ENCODE measurements at regions of chr1 and their contacts with region 1.

Region 1: DNA sequence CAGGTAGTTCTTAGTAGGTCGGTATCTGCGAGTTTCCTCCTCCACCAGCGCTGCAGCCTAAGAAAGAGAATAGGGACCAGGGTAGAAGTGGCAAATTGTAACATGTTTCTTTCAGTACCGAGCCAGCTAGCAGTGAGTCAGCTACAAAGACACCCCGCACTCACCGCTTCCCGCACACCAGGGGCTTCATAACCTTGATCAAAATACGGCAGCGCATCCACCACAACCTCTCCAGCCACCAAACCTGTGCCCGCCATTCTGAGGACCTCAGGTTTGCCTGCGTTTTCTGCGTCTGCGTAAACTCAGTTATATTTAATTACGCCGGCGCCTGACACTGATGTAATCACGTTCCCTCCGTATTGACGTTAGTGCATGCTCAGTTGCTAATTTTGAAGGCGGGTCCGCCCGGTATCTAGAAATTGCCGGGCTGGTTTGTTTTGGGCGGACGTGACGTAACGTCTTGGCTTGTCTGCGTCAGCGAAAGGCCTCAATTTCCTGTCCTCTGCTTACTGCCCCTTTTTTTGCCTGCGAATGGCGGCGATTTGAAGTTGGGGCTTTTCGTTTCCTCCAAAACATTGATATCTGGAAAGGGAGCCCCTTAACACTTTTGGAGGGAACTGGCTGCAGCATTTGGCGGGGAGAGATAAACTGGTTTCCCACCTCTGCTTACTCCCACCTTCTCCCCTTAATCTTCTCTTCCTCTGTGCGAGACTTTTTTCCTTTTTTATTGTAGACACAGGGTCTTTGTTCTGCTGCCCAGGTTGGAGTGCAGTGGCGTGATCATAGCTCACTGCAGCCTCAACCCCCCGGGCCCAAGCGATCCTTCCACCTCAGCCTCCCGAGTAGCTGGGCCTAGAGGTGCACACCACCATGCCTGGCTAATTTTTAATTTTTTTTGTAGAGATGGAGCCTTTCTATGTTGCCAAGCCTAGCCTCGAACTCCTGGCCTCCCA is at the start of gene BCAS2:
- DNase-seq: peak; percentile 89 to 94
- H3K4me3 ChIP-seq: peak within 1 kb of the TSS; percentile 61
- H3K4me3 Mint-ChIP-seq: peak within 1 kb of the TSS; percentile 96
- H3K27ac Mint-ChIP-seq: peak within 1 kb of the TSS; percentile 94
- H3K4me1 ChIP-seq: 0 out of 2 replicates have a peak, but pooled peaks cover 3% of the 10 kb centered on the region
- H3K4me1 Mint-ChIP-seq: no peaks in the 10 kb centered on the region
- H3K27me3 ChIP-seq: no peaks in the 10 kb centered on the region
- H3K27me3 Mint-ChIP-seq: no peaks in the 10 kb centered on the region
- CTCF ChIP-seq: no peak
- total RNA-seq, gene BCAS2: 29.8 and 30.1 TPM in 2 replicates

Region 2: DNA sequence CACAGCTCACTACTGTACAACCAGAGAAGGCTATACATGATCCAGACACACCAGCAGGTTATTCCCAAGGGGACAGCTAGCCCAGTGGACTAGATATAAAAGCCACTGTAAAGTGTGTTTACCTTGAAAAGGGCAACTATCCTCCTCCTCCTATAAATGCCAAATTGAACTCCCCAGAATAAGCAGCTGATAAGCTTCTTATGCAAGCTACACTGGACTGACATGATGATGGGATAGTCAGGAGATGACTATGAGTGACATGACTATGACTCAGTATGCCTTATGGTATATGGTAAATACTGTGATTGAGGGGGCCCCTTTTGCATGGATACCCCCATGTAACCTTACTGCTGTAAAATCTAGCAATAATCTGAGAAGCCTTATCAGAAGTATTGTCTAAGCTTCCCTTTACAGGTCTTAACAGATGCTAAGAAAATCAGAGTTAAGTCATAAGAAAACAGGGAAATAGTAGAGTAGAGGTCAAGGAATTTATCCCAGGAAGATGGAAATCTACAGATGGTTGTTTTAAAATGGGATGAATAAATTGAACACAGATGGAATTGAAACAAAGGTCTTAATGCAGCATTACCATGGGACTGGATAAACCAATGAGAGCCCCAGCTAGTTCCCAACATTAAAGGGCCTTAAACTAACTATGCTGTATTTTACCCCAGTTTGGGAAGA is 126.4 kb before region 1 on chr1:
- CTCF ChIA-PET with region 1: no interaction called
- POLR2A ChIA-PET with region 1: interaction called, 10 read pairs
- intact Hi-C with region 1: no loop called
- DNase-seq: no peak
- H3K4me3 ChIP-seq: no peak overlapping the region
- H3K4me3 Mint-ChIP-seq: no peak overlapping the region
- H3K27ac Mint-ChIP-seq: no peak overlapping the region
- H3K4me1 ChIP-seq: peaks cover 40% of the 10 kb centered on the region
- H3K4me1 Mint-ChIP-seq: peaks cover 18% of the 10 kb centered on the region
- H3K27me3 ChIP-seq: no peaks in the 10 kb centered on the region
- H3K27me3 Mint-ChIP-seq: no peaks in the 10 kb centered on the region
- CTCF ChIP-seq: no peak

Region 3: DNA sequence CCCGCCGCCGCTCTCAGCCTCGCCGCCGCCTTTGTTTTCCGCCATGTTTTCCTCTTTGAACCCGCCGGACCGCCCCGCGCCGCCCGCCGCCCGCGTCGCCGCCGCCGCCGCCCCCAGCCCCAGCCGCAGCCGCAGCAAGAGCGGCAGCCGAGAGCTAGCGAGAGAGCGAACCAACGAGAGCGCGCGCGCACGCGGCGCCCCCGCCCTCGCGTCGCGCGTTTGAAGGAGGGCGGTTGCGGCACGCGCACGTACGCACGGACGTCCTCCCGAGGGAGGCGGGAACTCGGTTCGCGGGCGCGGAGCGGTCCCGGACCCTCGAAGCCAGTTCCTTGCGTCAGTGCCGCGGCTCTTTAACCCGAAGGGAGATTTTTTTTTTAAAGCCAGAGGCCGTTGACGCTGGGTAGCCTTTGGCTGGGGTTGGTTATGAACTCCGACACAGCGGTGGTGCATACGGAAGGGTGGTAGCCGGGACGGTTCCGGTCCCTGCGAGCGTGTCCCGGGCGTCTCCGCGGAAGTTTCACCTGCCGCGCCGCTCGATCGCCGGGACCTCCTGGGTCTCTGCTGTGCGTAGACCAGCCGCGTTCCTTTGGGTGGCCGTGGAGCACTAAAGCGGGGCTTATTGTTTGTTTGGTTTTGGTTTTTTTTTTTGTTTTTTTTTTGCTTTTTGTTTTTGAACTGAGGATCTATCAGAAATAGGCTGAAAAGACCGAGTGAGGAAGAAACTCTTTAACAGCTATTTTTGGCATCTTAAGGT is 70.4 kb before region 1 on chr1 and contains the start of gene TRIM33:
- CTCF ChIA-PET with region 1: no interaction called
- POLR2A ChIA-PET with region 1: no interaction called
- intact Hi-C with region 1: loop called (anchors 2 kb)
- DNase-seq: peak; percentile 86 to 89
- H3K4me3 ChIP-seq: peak within 1 kb of the TSS; percentile 51
- H3K4me3 Mint-ChIP-seq: peak within 1 kb of the TSS; percentile 81
- H3K27ac Mint-ChIP-seq: peak within 1 kb of the TSS; percentile 95
- H3K4me1 ChIP-seq: peaks cover 11% of the 10 kb centered on the region; the same call in 1 of the 2 replicates
- H3K4me1 Mint-ChIP-seq: peaks cover 28% of the 10 kb centered on the region
- H3K27me3 ChIP-seq: no peaks in the 10 kb centered on the region
- H3K27me3 Mint-ChIP-seq: no peaks in the 10 kb centered on the region
- CTCF ChIP-seq: no peak
- total RNA-seq, gene TRIM33: 28.7 and 30.4 TPM in 2 replicates

Region 4: GRCh38 chr1:114558544-114558943 is 23.1 kb before region 1 on chr1:
- CTCF ChIA-PET with region 1: no interaction called
- POLR2A ChIA-PET with region 1: no interaction called
- intact Hi-C with region 1: no loop called
- DNase-seq: no peak
- H3K4me3 ChIP-seq: no peak overlapping the region
- H3K4me3 Mint-ChIP-seq: no peak overlapping the region
- H3K27ac Mint-ChIP-seq: no peak overlapping the region
- H3K4me1 ChIP-seq: no peaks in the 10 kb centered on the region
- H3K4me1 Mint-ChIP-seq: peaks cover 6% of the 10 kb centered on the region
- H3K27me3 ChIP-seq: no peaks in the 10 kb centered on the region
- H3K27me3 Mint-ChIP-seq: no peaks in the 10 kb centered on the region
- CTCF ChIP-seq: peak in 1 of 2 experiments; percentile 21

Region 5: DNA sequence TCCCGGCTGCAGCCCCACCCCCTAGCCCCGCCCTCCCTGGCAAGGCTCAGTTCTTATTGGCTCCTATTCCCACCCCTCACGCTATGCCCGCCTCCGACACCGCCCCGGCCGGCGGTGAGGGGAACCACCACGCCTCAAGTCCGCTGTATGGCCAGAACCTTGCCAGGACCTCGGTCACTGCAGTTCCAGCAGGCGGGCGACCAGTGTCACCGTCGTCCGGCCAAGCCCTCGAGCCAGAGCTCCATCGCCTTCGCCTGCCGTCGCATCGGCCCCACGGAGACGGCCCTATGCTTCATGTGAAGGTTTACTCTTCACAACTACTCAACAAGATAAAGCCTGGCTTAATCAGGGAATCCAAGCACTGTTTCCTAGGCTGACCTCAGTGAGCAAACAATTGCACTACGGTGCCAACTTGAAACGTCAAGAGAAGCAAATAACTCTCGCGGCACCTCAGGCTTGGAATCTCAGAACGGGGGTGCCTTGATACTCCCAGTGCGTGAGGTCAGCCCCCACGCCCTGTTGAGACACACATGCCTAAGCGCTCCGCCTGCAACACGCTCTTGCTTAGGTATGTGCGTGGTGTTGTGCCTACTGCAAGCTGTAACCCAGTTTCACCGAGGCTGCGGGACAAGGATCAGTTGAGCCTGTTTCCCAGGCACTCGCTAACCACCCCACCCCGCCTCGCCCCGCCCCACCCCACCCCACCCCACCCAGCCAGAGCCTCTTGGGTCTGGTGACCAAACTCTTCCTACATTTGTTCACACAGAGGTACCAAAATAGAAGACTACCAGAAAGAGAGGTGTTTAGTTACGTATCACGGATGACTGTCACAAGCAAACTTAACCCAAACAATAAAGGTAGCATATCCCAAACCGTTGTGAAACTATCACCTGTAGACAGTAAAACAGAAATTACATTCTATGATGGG is 88.7 kb after region 1 on chr1:
- CTCF ChIA-PET with region 1: no interaction called
- POLR2A ChIA-PET with region 1: no interaction called
- intact Hi-C with region 1: loop called (anchors 2 kb)
- DNase-seq: peak; percentile 89 to 91
- H3K4me3 ChIP-seq: peak overlapping the region; percentile 76
- H3K4me3 Mint-ChIP-seq: peak overlapping the region; percentile 81
- H3K27ac Mint-ChIP-seq: peak overlapping the region; percentile 59
- H3K4me1 ChIP-seq: no peaks in the 10 kb centered on the region
- H3K4me1 Mint-ChIP-seq: peaks cover 21% of the 10 kb centered on the region
- H3K27me3 ChIP-seq: no peaks in the 10 kb centered on the region
- H3K27me3 Mint-ChIP-seq: peaks cover 8% of the 10 kb centered on the region
- CTCF ChIP-seq: no peak